ENCODE measurements at regions of chr10 and their contacts with region 1.

Region 1: DNA sequence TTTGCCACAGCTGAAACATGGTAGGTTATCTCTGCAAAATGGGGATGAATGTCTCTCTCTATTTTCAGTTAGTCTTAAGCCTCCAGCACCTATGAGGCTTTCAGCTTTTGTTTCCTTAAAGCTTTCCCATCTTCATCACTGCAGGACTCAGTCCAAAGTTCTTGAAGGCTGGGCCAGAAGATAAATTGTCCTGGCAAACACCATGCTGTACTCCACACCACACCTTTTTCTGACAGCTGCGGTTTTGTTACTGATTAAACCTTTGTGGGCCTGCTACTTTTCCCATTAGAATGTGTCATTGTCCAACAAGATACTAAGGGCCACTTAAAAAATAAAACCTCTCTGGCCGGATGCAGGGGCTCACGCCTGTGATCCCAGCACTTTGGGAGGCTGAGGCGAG is 87.2 kb upstream of the A1CF start:
- DNase-seq: peak; percentile 68 to 84
- H3K4me3 ChIP-seq: no peak overlapping the region
- H3K4me3 Mint-ChIP-seq: no peak overlapping the region
- H3K27ac Mint-ChIP-seq: no peak overlapping the region
- H3K4me1 ChIP-seq: peaks cover 23% of the 10 kb centered on the region
- H3K4me1 Mint-ChIP-seq: peaks cover 12% of the 10 kb centered on the region
- H3K27me3 ChIP-seq: no peaks in the 10 kb centered on the region
- H3K27me3 Mint-ChIP-seq: no peaks in the 10 kb centered on the region
- CTCF ChIP-seq: no peak

Region 2: DNA sequence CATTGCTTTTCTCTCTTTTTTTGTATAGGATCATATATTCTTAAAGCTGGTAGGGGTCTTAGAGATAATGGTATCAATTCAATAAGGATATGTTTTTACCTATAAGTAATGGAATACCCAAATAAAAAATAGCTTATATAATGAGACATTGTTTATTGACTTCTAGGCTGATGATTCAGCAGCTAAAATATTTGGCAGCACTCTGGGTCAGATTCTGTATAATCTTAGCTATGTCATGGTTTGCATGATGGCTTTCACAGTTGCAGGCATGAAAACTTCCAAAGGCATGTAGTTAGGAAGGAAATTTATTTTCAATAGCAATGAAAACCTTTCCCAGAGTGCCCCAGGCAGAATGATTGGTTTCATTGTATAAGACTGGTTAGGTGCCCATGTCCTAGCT is 55.1 kb before region 1 on chr10:
- CTCF ChIA-PET with region 1: no interaction called
- POLR2A ChIA-PET with region 1: no interaction called
- intact Hi-C with region 1: no loop called
- DNase-seq: no peak
- H3K4me3 ChIP-seq: no peak overlapping the region
- H3K4me3 Mint-ChIP-seq: no peak overlapping the region
- H3K27ac Mint-ChIP-seq: no peak overlapping the region
- H3K4me1 ChIP-seq: no peaks in the 10 kb centered on the region
- H3K4me1 Mint-ChIP-seq: no peaks in the 10 kb centered on the region
- H3K27me3 ChIP-seq: no peaks in the 10 kb centered on the region; the same call in 1 of the 2 replicates
- H3K27me3 Mint-ChIP-seq: peaks cover 10% of the 10 kb centered on the region
- CTCF ChIP-seq: no peak

Region 3: DNA sequence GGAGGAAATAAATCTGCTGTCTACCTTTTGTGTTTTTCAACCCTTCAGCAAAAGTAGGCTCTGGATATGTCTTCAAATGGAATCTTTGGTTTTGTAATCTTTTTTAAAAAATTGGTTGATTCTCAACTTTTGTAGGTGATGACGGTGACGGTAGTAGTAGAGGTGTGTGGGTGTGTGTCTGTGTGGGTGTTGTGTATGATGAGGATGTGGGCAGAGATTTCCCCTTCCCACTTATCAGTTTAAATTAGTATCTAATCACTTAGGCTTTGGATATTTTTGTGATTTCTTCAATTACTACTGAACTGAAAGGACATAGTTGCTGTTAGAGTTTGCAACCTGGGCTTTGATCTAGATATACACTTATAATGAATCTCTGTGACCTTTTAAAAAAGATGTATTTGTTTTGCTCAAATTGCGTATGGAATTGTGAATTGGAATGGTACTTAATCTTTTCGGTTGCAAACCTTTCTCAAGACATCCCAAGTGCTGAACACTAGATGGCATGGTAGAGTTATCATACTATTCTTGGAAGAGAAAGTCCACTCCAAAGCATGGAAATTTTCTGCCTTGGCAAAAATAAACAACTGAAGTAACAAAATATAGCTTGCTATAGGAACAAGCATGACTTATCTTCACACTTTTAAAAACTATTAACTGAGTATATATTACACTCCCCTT is 35.2 kb before region 1 on chr10:
- CTCF ChIA-PET with region 1: no interaction called
- POLR2A ChIA-PET with region 1: no interaction called
- intact Hi-C with region 1: loop called (anchors 2 kb)
- DNase-seq: peak in 1 of 2 experiments; percentile 54
- H3K4me3 ChIP-seq: no peak overlapping the region
- H3K4me3 Mint-ChIP-seq: no peak overlapping the region
- H3K27ac Mint-ChIP-seq: no peak overlapping the region
- H3K4me1 ChIP-seq: no peaks in the 10 kb centered on the region
- H3K4me1 Mint-ChIP-seq: no peaks in the 10 kb centered on the region
- H3K27me3 ChIP-seq: no peaks in the 10 kb centered on the region
- H3K27me3 Mint-ChIP-seq: peaks cover 32% of the 10 kb centered on the region
- CTCF ChIP-seq: peak; percentile 51 to 91